Ascending aorta (tissue), 2 donors: ENCODE measurements at regions of chr3 and their contacts with region 1.

Region 1: GRCh38 chr3:115092220-115092791 is 54.8 kb downstream of the ZBTB20 start:
- DNase-seq: peak in 1 of 2 donors; percentile 74
- H3K4me3 ChIP-seq: no peak overlapping the region
- H3K27ac ChIP-seq: no peak overlapping the region
- H3K4me1 ChIP-seq: peaks cover 0 to 8% of the 10 kb centered on the region in 2 donors
- H3K27me3 ChIP-seq: no peaks in the 10 kb centered on the region
- CTCF ChIP-seq: peak; percentile 1 to 55 (median 52)

Region 2: GRCh38 chr3:115169808-115170207 is 77.5 kb after region 1 on chr3:
- intact Hi-C with region 1: loop called (anchors 2 kb)
- DNase-seq: no peak
- H3K4me3 ChIP-seq: no peak overlapping the region
- H3K27ac ChIP-seq: no peak overlapping the region
- H3K4me1 ChIP-seq: no peaks in the 10 kb centered on the region
- H3K27me3 ChIP-seq: no peaks in the 10 kb centered on the region
- CTCF ChIP-seq: peak in 2 of 3 experiments; percentile 13 to 48

Region 3: DNA sequence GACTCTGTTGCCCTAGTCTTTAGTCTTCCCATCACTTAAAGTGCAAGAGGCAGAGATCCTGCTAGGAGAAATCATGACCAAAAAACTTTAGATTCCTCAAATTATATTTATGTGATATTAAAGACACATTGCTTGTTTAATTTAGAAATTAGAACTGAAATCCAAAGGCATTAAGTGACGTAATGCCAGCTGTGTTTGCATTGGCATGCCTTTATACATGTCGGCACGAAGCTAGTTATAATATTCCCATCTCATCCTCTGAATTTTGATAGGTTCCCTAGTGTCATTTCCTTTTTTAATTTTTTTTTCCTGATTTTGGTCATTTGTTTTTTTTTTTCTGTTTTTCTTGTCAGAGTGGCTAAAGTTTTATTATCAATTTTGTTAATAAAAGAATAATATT is 258.3 kb after region 1 on chr3:
- intact Hi-C with region 1: no loop called
- DNase-seq: no peak
- H3K4me3 ChIP-seq: no peak overlapping the region
- H3K27ac ChIP-seq: no peak overlapping the region
- H3K4me1 ChIP-seq: peaks cover 0 to 5% of the 10 kb centered on the region in 2 donors
- H3K27me3 ChIP-seq: no peaks in the 10 kb centered on the region
- CTCF ChIP-seq: no peak